Caco-2 (cell line): ENCODE measurements at regions of chr10 and their contacts with region 1.

Region 1: DNA sequence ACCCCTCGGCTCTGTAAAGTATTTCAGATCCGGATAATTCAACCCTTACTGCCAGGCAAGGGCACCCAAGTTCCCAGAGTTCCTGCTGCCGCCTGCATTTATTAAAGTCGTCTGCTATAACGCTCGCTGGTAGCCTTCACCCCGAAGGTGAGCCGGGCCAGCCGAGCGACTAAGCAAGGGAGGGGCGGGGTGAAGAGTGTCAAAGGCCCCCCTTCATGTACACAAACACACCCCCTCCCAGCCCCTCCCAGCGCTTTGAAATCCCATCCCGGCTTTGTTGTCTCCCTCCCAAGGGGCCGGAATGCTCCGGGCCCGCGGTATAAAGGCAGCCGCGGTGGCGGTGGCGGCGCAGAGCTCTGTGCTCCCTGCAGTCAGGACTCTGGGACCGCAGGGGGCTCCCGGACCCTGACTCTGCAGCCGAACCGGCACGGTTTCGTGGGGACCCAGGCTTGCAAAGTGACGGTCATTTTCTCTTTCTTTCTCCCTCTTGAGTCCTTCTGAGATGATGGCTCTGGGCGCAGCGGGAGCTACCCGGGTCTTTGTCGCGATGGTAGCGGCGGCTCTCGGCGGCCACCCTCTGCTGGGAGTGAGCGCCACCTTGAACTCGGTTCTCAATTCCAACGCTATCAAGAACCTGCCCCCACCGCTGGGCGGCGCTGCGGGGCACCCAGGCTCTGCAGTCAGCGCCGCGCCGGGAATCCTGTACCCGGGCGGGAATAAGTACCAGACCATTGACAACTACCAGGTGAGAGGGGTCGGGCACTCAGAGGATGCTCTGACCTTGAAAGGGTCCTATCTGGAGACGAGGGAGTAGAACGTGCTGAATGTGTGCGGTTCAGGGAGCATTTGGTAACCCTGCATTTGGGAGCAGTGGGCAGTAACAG is at the start of gene DKK1:
- DNase-seq: peak; percentile 99 to 100
- H3K4me3 ChIP-seq: peak within 1 kb of the TSS; percentile 63
- H3K4me3 Mint-ChIP-seq: peak within 1 kb of the TSS; percentile 96
- H3K27ac Mint-ChIP-seq: peak within 1 kb of the TSS; percentile 95
- H3K4me1 ChIP-seq: peaks cover 40% of the 10 kb centered on the region
- H3K4me1 Mint-ChIP-seq: peaks cover 33% of the 10 kb centered on the region
- H3K27me3 ChIP-seq: no peaks in the 10 kb centered on the region
- H3K27me3 Mint-ChIP-seq: no peaks in the 10 kb centered on the region
- CTCF ChIP-seq: peak; percentile 99
- total RNA-seq, gene DKK1: 1,709 and 1,866 TPM in 2 replicates

Region 2: DNA sequence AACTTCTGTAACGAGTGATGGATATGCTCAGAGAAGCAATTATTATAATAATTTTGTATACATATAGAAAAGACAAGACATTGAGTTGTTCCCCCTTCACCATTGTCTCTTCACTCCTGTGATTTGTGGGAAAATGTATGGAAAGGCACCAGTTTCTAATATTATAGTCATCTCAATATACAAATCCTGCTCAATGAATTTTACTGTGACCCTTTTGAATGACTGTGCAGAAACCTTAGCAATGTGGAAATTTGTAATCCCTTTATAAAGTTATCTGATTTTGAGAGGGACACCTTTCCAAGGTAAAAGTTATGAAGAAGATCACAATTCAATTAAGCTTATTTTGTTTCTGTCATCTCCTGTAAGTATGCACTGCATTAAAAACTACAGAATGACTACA is 74.4 kb before region 1 on chr10:
- CTCF ChIA-PET with region 1: no interaction called
- POLR2A ChIA-PET with region 1: no interaction called
- intact Hi-C with region 1: no loop called
- DNase-seq: no peak
- H3K4me3 ChIP-seq: no peak overlapping the region
- H3K4me3 Mint-ChIP-seq: no peak overlapping the region
- H3K27ac Mint-ChIP-seq: no peak overlapping the region
- H3K4me1 ChIP-seq: no peaks in the 10 kb centered on the region
- H3K4me1 Mint-ChIP-seq: no peaks in the 10 kb centered on the region
- H3K27me3 ChIP-seq: no peaks in the 10 kb centered on the region
- H3K27me3 Mint-ChIP-seq: no peaks in the 10 kb centered on the region
- CTCF ChIP-seq: no peak

Region 3: DNA sequence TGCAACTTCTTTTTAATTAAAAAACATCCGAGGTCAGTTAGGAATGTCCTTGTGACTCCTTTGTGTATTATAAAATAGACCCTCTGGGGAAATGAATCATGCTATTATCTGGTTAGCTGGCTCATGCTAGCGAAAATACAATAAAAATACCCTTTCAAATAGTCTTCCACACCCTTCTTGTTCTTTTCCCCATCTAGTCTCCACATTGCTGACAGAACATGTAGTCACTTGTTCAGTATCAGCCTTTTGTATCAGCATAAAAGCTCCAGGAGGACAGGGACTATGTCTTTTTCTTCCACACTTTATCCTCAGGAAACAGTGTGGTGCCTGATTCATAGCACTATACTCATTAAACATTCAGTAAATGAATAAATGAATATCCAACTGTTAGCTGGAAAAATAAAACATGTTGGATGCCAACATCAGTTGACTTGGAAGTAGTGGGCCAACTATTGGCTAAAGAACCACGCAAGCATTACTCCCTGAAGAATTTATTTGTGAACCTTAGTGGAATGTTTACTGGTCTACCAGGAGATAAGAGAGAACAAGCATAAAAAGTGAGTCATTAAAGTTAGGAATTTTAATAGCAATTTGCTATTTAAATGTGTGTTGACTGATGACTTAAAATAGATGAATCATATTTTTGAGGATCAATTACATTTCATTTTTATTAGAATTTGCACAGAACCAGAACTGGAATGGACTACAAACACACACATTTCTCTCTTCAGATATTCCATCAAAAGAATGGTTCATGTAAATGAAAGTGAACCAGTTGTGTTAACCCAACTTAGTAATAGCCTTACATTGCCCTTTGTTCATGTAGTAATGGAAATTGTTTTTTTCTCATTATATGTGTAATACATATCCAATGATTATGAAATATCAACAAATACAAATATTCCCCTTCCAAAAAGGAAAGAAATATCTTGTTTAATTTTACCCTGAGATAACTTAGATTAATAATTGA is 129.5 kb after region 1 on chr10:
- CTCF ChIA-PET with region 1: interaction called, 5 read pairs
- POLR2A ChIA-PET with region 1: interaction called, 5 read pairs
- intact Hi-C with region 1: loop called (anchors 1 kb)
- DNase-seq: peak in 1 of 2 experiments; percentile 71
- H3K4me3 ChIP-seq: no peak overlapping the region
- H3K4me3 Mint-ChIP-seq: peak overlapping the region; percentile 29
- H3K27ac Mint-ChIP-seq: peak overlapping the region; percentile 83
- H3K4me1 ChIP-seq: peaks cover 57% of the 10 kb centered on the region
- H3K4me1 Mint-ChIP-seq: peaks cover 39% of the 10 kb centered on the region
- H3K27me3 ChIP-seq: no peaks in the 10 kb centered on the region
- H3K27me3 Mint-ChIP-seq: no peaks in the 10 kb centered on the region
- CTCF ChIP-seq: no peak

Region 4: DNA sequence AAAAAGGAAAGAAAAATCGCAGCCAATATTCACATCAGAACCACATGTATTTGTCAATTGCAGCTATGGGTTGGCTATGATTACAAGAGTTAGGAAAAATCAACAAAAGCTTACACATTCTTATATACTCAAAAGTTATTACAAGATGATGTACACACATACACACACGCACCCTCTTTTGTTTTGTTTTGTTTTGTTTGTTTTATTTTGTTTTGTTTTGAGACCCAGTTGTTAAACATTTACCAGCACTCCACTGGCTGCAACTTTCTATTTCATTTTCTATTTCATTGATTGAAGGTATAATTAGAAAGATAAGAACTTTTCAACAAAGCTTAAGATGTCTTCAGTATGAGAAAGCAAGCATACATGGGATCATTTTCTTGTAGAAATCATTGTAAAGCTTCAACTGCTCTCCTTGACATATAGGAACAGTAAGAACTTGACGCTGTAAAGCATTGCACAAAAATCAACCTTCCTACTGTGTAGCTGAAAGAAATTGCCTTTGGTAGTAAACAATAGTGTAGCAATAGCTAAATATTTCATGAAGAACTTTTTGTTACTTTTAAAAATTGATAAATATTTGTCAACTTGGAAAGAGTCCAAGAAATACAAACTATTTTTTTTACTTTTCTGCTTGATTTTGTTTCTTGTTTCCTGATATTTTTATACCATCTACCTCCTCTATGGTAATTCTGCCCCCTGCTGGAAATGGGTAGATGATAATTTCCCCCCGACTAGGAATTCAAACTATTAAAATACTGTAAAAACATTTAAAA is 252.5 kb after region 1 on chr10:
- CTCF ChIA-PET with region 1: interaction called, 48 read pairs
- POLR2A ChIA-PET with region 1: interaction called, 3 read pairs
- intact Hi-C with region 1: no loop called
- DNase-seq: peak in 1 of 2 experiments; percentile 65
- H3K4me3 ChIP-seq: no peak overlapping the region
- H3K4me3 Mint-ChIP-seq: no peak overlapping the region
- H3K27ac Mint-ChIP-seq: no peak overlapping the region
- H3K4me1 ChIP-seq: peaks cover 5% of the 10 kb centered on the region
- H3K4me1 Mint-ChIP-seq: no peaks in the 10 kb centered on the region
- H3K27me3 ChIP-seq: no peaks in the 10 kb centered on the region; the same call in 1 of the 2 replicates
- H3K27me3 Mint-ChIP-seq: no peaks in the 10 kb centered on the region
- CTCF ChIP-seq: peak; percentile 78 to 83